ENCODE measurements at regions of chr2 and their contacts with region 1.

Region 1: GRCh38 chr2:237474931-237475703 is 11.9 kb upstream of the MLPH start:
- DNase-seq: peak; percentile 67
- H3K4me3 Mint-ChIP-seq: peak overlapping the region; percentile 83
- H3K27ac Mint-ChIP-seq: peak overlapping the region; percentile 87
- H3K4me1 Mint-ChIP-seq: peaks cover 12% of the 10 kb centered on the region
- H3K27me3 Mint-ChIP-seq: peaks cover 20% of the 10 kb centered on the region

Region 2: DNA sequence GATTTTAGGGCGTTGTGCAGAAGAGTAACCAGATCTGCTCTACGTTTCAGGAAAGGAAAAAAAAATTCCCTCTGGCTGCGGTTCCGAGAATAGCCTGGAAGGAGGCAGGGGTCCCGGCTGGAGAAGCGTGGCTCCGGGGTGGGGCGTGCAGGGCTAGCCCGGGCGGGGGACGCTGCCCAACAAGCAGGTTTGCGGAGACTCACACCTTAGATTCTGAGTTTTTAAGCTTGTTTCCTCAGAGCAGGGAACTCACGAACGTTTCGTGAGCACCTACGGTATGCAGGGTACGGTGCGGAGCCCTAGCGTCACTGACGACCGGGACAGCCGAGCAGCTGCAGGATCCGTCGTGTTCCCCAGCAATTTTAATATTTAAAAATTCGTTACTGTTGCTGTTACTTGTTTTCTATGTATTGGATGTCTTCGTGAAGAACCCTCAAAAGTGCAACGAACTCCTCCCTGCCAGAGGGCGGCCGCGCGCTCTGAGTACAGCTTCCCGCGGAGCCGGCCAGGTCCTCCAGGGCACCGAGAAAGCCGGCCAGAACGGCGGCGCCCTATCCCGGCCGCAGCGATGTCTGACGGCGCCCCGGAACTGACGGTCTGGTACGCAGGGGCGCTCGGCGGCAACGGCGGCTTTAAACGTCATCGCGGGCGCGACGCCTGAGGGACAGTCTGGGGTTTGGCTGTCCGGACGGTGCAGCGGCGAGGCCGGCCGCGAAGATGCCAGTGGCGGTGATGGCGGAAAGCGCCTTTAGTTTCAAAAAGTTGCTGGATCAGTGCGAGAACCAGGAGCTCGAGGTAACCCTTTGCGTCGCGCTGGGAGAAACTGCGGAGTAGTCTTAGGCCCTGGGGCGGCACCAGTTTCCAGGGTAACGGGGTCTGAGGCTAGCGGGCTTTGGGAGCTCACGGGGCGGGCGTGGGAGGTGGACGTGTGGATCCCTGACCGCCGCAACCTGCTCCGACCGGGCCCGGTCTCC is 389.6 kb before region 1 on chr2 and contains the start of gene COPS8:
- intact Hi-C with region 1: loop called (anchors 1 kb)
- DNase-seq: peak; percentile 90
- H3K4me3 Mint-ChIP-seq: peak within 1 kb of the TSS; percentile 98
- H3K27ac Mint-ChIP-seq: peak within 1 kb of the TSS; percentile 98
- H3K4me1 Mint-ChIP-seq: peaks cover 15% of the 10 kb centered on the region
- H3K27me3 Mint-ChIP-seq: no peaks in the 10 kb centered on the region
- total RNA-seq, gene COPS8: 59.2 and 63.3 TPM in 2 replicates

Region 3: DNA sequence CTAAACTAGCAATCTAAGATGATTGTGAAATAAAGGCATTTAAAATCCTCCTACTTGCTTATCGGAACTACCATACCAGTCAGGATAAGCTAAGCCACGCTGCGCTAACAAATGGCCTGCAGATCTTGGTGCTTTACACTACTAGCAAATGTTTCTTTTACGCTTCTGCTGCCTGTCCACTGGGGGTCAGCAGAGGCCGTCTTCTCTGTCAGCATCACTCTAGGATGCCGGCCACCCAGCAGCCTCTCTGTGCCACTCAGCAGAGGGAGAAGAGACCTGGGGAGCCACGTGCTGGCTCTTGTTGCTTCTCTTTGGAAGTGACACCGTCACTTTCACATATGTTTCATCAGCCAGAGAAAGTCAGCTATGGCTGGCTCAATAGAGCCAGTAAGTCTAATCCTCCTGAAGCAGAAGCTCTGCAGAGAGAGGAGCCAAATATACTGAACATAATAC is 352.9 kb before region 1 on chr2:
- intact Hi-C with region 1: loop called (anchors 1 kb)
- DNase-seq: peak; percentile 11
- H3K4me3 Mint-ChIP-seq: no peak overlapping the region
- H3K27ac Mint-ChIP-seq: no peak overlapping the region
- H3K4me1 Mint-ChIP-seq: no peaks in the 10 kb centered on the region
- H3K27me3 Mint-ChIP-seq: peaks cover 4% of the 10 kb centered on the region

Region 4: GRCh38 chr2:237421542-237422116 is 53.5 kb before region 1 on chr2:
- intact Hi-C with region 1: loop called (anchors 1 kb)
- DNase-seq: peak; percentile 61
- H3K4me3 Mint-ChIP-seq: peak overlapping the region; percentile 53
- H3K27ac Mint-ChIP-seq: peak overlapping the region; percentile 35
- H3K4me1 Mint-ChIP-seq: peaks cover 26% of the 10 kb centered on the region
- H3K27me3 Mint-ChIP-seq: peaks cover 27% of the 10 kb centered on the region

Region 5: GRCh38 chr2:237427769-237428506 is 47.2 kb before region 1 on chr2:
- intact Hi-C with region 1: loop called (anchors 1 kb)
- DNase-seq: peak; percentile 49
- H3K4me3 Mint-ChIP-seq: peak overlapping the region; percentile 67
- H3K27ac Mint-ChIP-seq: peak overlapping the region; percentile 93
- H3K4me1 Mint-ChIP-seq: peaks cover 76% of the 10 kb centered on the region
- H3K27me3 Mint-ChIP-seq: peaks cover under 1% of the 10 kb centered on the region

Region 6: DNA sequence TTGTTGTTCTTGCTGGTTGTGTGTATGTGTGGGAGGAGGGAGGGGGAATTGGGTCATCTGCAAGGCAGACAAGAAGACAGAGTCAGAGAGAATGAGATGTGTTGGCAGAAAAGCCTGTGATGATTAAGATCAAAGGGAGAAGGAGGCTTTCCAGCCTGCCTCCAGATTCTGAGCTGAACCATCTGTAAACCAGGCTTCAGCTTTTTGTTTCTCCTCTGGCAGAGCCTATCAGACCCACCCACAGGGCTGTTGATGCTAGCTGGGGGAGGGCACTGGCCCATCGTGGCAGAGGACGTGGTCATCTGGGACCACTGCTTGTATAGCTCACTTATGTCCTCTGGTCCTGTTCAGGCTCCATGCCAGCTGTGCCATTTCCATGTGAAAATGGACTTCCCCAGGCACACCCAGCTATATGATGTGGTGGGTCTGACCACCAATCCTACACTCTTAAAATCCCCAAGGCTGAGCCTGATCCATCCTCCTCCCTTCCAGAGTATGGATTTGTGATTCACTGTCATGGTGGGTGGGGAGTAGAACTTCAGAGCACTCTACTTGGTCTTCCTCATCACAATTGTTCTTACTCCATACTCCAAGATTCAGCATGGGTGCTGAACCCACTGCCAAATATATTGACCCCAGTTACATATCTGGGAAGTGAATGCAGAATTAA is 33.4 kb before region 1 on chr2:
- intact Hi-C with region 1: loop called (anchors 1 kb)
- DNase-seq: no peak
- H3K4me3 Mint-ChIP-seq: peak overlapping the region; percentile 41
- H3K27ac Mint-ChIP-seq: peak overlapping the region; percentile 86
- H3K4me1 Mint-ChIP-seq: peaks cover 58% of the 10 kb centered on the region
- H3K27me3 Mint-ChIP-seq: no peaks in the 10 kb centered on the region